CD4-positive, alpha-beta T cell (primary cell): ENCODE measurements at regions of chr2 and their contacts with region 1.

Region 1: GRCh38 chr2:84022810-84023431 is 436.2 kb downstream of the SUCLG1 start:
- DNase-seq: peak in 3 of 14 experiments; percentile 33 to 46 (median 43)
- ATAC-seq: no peak
- H3K4me3 ChIP-seq: no peak overlapping the region
- H3K4me3 Mint-ChIP-seq: no peak overlapping the region
- H3K27ac ChIP-seq: no peak overlapping the region
- H3K27ac Mint-ChIP-seq: no peak overlapping the region
- H3K4me1 ChIP-seq: no peaks in the 10 kb centered on the region
- H3K4me1 Mint-ChIP-seq: no peaks in the 10 kb centered on the region
- H3K27me3 ChIP-seq: no peaks in the 10 kb centered on the region
- H3K27me3 Mint-ChIP-seq: peaks cover 8% of the 10 kb centered on the region
- CTCF ChIP-seq: no peak

Region 2: GRCh38 chr2:84302513-84303412 is 279.8 kb after region 1 on chr2:
- CTCF ChIA-PET with region 1: no interaction called
- POLR2A ChIA-PET with region 1: no interaction called
- intact Hi-C with region 1: loop called in 1 of 2 experiments (anchors 5 kb)
- DNase-seq: peak in 8 of 14 experiments; percentile 4 to 61 (median 21)
- ATAC-seq: peak; percentile 37
- H3K4me3 ChIP-seq: no peak overlapping the region
- H3K4me3 Mint-ChIP-seq: no peak overlapping the region
- H3K27ac ChIP-seq: no peak overlapping the region
- H3K27ac Mint-ChIP-seq: no peak overlapping the region
- H3K4me1 ChIP-seq: no peaks in the 10 kb centered on the region
- H3K4me1 Mint-ChIP-seq: no peaks in the 10 kb centered on the region
- H3K27me3 ChIP-seq: no peaks in the 10 kb centered on the region
- H3K27me3 Mint-ChIP-seq: peaks cover 17% of the 10 kb centered on the region
- CTCF ChIP-seq: peak; percentile 64